ENCODE measurements at regions of chr6 and their contacts with region 1.

Region 1: DNA sequence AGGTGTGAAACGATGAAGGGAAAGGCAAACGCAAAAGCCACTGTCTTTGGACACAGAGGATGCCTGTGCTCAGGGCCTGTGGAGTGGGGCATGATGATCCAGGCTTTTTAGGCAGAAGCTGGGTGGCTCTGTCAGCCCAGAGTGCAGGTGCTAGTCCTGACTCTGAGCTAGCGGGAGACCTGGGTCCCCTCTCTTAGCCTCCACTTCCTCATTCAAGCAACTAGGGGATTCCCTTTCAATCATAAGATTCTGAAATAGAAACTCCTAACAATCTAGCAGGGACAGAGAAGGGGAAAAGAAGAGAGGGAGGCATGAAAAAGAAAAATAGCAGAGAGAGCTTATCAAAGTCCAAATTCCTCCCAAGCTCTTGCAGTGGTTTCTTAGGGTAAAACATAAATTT is 7.6 kb upstream of the HIVEP2 start:
- DNase-seq: no peak
- H3K4me3 ChIP-seq: no peak overlapping the region
- H3K27ac ChIP-seq: no peak overlapping the region
- H3K4me1 ChIP-seq: no peaks in the 10 kb centered on the region
- H3K27me3 ChIP-seq: no peaks in the 10 kb centered on the region
- CTCF ChIP-seq: no peak
- POLR2A ChIP-seq: no peak

Region 2: GRCh38 chr6:142935553-142936517 is 16.8 kb before region 1 on chr6:
- intact Hi-C with region 1: no loop called
- DNase-seq: no peak
- H3K4me3 ChIP-seq: no peak overlapping the region
- H3K27ac ChIP-seq: no peak overlapping the region
- H3K4me1 ChIP-seq: peaks cover 15% of the 10 kb centered on the region
- H3K27me3 ChIP-seq: no peaks in the 10 kb centered on the region
- CTCF ChIP-seq: no peak
- POLR2A ChIP-seq: no peak

Region 3: GRCh38 chr6:142985281-142985680 is 32.7 kb after region 1 on chr6:
- intact Hi-C with region 1: no loop called
- DNase-seq: no peak
- H3K4me3 ChIP-seq: no peak overlapping the region
- H3K27ac ChIP-seq: no peak overlapping the region
- H3K4me1 ChIP-seq: no peaks in the 10 kb centered on the region
- H3K27me3 ChIP-seq: no peaks in the 10 kb centered on the region
- CTCF ChIP-seq: no peak
- POLR2A ChIP-seq: no peak

Region 4: DNA sequence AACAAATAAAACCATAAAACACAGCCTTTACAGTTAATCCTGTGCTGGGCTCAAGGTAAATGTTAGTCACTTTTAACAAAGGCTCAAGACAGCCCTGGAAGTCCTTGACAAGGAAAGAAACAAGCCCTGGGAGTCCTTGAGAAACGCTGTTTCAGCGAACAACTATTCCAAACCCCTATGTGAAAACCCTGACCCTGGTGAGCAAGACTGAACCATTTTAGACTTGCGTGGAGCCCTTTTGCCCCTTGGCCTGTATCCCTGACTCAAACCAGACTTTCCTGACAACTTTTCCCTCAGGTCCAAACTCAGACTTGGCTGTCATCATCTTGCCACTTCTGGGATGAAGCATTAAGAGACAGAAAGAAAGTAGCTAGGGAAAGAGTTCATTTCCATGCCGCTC is 288.5 kb after region 1 on chr6:
- intact Hi-C with region 1: loop called (anchors 10 kb)
- DNase-seq: no peak
- H3K4me3 ChIP-seq: no peak overlapping the region
- H3K27ac ChIP-seq: no peak overlapping the region
- H3K4me1 ChIP-seq: no peaks in the 10 kb centered on the region
- H3K27me3 ChIP-seq: no peaks in the 10 kb centered on the region
- CTCF ChIP-seq: no peak
- POLR2A ChIP-seq: no peak